Activated CD4-positive, alpha-beta T cell treated with anti-CD3 and anti-CD28 coated beads, Interleukin-2, amount 10 ng/mL, durations not matched to agents 24 days and 14 days (primary cell): ENCODE measurements at regions of chr6 and their contacts with region 1.

Region 1: DNA sequence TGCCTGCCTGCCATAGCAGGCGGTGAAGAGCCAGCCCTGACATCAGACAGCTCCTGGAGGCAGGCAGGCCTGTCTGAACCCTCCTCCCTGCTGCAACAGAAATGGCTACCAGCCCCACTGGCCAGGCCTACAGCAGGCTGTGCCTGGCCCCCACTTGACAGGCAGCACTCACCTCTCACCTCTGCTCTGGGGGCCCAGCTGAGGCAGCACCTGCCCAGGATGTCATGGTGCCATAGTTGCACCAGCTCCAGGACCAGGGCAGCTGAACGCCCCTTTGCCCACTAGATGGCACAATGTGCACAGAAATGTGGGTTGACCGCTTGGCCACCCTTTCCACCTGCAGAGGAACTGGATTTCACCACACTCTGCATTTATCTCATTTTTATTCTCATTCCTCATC is 30.6 kb downstream of the MRPL14 start:
- DNase-seq: peak; percentile 92
- H3K4me3 Mint-ChIP-seq: no peak overlapping the region
- H3K27ac Mint-ChIP-seq: no peak overlapping the region
- H3K4me1 Mint-ChIP-seq: peaks cover 5% of the 10 kb centered on the region
- H3K27me3 Mint-ChIP-seq: no peaks in the 10 kb centered on the region

Region 2: DNA sequence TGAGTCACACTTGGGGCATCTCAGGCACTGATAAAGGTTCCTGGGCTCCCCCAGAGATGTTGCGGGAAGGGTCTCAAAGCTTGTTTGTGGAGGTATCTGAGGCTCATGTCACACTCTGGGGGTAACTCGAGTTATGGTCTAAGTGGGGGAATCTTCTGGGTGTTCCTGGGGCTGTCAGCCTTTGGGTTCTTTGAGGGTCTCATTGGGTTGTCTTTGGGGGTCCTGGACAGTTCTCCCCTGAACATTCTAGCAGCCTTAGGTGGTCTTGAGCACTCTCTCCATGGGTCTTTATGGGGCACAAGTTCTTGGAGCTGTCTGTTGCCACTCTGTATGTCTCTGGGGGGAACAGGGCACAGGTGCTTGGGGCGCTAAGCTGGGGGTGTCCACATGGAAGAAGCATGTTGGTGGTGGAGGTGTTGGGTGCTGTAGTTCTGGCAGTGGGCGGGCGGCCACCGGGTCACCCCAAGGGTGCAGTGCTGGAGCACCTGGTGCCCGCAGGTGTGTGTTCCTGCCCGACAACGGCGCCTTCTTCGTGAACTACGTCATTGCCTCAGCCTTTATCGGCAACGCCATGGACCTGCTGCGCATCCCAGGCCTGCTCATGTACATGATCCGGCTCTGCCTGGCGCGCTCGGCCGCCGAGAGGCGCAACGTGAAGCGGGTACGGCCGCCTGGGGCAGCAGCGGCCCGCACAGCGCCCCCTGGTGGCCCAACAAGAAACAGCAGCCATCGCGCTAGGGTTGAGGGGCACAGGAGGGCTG is 54.9 kb after region 1 on chr6:
- intact Hi-C with region 1: loop called (anchors 1 kb)
- DNase-seq: peak; percentile 95
- H3K4me3 Mint-ChIP-seq: peak overlapping the region; percentile 17
- H3K27ac Mint-ChIP-seq: no peak overlapping the region
- H3K4me1 Mint-ChIP-seq: peaks cover 11% of the 10 kb centered on the region
- H3K27me3 Mint-ChIP-seq: no peaks in the 10 kb centered on the region

Region 3: GRCh38 chr6:44237813-44238433 is 141.3 kb after region 1 on chr6:
- intact Hi-C with region 1: loop called (anchors 5 kb)
- DNase-seq: peak; percentile 96
- H3K4me3 Mint-ChIP-seq: peak overlapping the region; percentile 89
- H3K27ac Mint-ChIP-seq: peak overlapping the region; percentile 98
- H3K4me1 Mint-ChIP-seq: peaks cover 33% of the 10 kb centered on the region
- H3K27me3 Mint-ChIP-seq: peaks cover 2% of the 10 kb centered on the region

Region 4: GRCh38 chr6:44338228-44339122 is 241.9 kb after region 1 on chr6:
- intact Hi-C with region 1: loop called (anchors 1 kb)
- DNase-seq: peak; percentile 91
- H3K4me3 Mint-ChIP-seq: no peak overlapping the region
- H3K27ac Mint-ChIP-seq: no peak overlapping the region
- H3K4me1 Mint-ChIP-seq: no peaks in the 10 kb centered on the region
- H3K27me3 Mint-ChIP-seq: peaks cover 30% of the 10 kb centered on the region